ENCODE measurements at regions of chr18 and their contacts with region 1.

Region 1: GRCh38 chr18:74951165-74951760 is 257.7 kb downstream of the PTGR3 start:
- DNase-seq: peak; percentile 91
- ATAC-seq: peak; percentile 93
- H3K4me3 ChIP-seq: no peak overlapping the region
- H3K27ac ChIP-seq: peak overlapping the region; percentile 71
- H3K4me1 ChIP-seq: peaks cover 35% of the 10 kb centered on the region
- H3K27me3 ChIP-seq: no peaks in the 10 kb centered on the region
- CTCF ChIP-seq: no peak

Region 2: DNA sequence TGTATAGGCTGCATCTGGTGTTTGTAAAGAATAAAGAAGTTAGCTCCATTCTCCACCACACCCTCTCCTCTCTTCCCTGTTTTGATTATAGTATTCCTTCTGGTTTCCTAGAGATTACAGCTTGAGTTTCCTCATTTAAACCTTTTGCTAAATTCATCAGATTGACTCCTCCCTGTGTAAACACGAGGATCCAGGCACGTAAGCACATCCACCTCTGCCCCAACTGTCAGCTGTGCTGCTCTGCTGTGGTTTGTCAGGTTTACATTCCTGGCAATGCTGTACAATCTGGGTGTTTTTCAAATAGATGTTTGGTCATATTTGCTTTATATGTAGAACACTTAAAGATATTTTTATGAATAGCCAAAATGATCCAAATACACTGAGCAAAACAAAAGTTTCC is 45.1 kb before region 1 on chr18:
- CTCF ChIA-PET with region 1: no interaction called
- POLR2A ChIA-PET with region 1: no interaction called
- intact Hi-C with region 1: loop called (anchors 1 kb)
- DNase-seq: peak; percentile 75
- ATAC-seq: peak; percentile 100
- H3K4me3 ChIP-seq: no peak overlapping the region
- H3K27ac ChIP-seq: peak overlapping the region; percentile 28; the same call in 1 of the 2 replicates
- H3K4me1 ChIP-seq: peaks cover 16% of the 10 kb centered on the region
- H3K27me3 ChIP-seq: no peaks in the 10 kb centered on the region
- CTCF ChIP-seq: no peak

Region 3: DNA sequence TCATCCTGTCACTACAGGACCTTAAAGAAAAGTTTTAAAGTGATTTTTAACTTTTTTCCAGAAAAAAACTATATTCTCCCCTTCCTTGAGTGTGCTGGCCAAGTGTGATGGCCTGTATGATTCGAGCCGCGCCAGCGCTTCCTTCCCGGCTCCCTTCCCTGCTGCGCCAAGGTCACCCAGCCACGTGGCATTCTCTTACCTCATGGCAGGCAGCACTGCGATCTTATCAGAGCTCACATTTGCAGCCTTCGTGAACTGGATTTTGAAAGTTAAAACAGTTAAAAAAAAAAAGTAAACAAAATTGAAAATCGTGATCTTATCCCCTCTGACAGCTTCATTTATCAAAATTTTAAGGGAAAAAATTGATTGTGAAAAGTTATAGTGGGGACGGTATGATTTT is 22.2 kb before region 1 on chr18:
- CTCF ChIA-PET with region 1: no interaction called
- POLR2A ChIA-PET with region 1: no interaction called
- intact Hi-C with region 1: no loop called
- DNase-seq: no peak
- ATAC-seq: no peak
- H3K4me3 ChIP-seq: no peak overlapping the region
- H3K27ac ChIP-seq: no peak overlapping the region
- H3K4me1 ChIP-seq: no peaks in the 10 kb centered on the region
- H3K27me3 ChIP-seq: no peaks in the 10 kb centered on the region
- CTCF ChIP-seq: no peak

Region 4: GRCh38 chr18:75070625-75071483 is 119.6 kb after region 1 on chr18:
- CTCF ChIA-PET with region 1: no interaction called
- POLR2A ChIA-PET with region 1: no interaction called
- intact Hi-C with region 1: loop called (anchors 2 kb)
- DNase-seq: peak; percentile 95
- ATAC-seq: peak; percentile 91
- H3K4me3 ChIP-seq: peak overlapping the region; percentile 62
- H3K27ac ChIP-seq: peak overlapping the region; percentile 87
- H3K4me1 ChIP-seq: peaks cover 26% of the 10 kb centered on the region
- H3K27me3 ChIP-seq: no peaks in the 10 kb centered on the region
- CTCF ChIP-seq: no peak

Measured in PC-3 (cell line).